SK-MEL-5 (cell line): ENCODE measurements at regions of chr11 and their contacts with region 1.

Region 1: DNA sequence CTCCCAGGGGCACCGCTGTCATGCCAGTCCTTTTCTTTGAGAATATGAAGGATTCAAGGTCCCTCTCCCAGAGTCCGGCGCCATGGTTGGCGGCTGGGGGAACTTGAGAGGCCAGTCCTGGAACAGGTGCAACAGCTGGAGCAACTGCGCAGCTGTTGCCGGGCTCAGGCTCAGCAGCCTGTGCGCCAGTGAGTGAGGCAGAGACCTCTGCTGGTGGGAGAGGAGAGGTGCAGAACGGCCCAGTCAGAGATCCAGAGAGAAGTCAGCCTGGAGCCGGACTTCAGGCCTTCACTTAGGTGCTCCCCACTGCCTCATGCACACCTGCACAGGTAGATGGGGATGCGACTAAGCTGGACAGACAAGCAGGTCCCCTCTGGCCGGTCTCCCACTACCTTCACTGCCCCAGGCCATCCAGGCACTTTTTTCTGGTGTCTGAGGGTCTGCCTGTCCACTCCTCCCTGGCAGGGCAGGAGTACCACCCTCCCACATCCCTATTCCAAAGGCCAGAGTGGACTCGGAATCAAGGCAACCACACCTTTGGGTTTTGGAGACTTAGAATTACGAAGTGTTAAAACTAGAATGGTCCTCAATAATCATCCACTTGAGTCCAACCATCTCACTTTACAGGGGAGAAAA is 4.6 kb downstream of the CHRDL2 start:
- DNase-seq: peak; percentile 81

Region 2: GRCh38 chr11:74473382-74474173 is 253.1 kb before region 1 on chr11:
- in situ Hi-C with region 1: loop called (anchors 10 kb)
- DNase-seq: no peak

Region 3: GRCh38 chr11:74506823-74507222 is 219.8 kb before region 1 on chr11:
- in situ Hi-C with region 1: no loop called
- DNase-seq: no peak

Region 4: DNA sequence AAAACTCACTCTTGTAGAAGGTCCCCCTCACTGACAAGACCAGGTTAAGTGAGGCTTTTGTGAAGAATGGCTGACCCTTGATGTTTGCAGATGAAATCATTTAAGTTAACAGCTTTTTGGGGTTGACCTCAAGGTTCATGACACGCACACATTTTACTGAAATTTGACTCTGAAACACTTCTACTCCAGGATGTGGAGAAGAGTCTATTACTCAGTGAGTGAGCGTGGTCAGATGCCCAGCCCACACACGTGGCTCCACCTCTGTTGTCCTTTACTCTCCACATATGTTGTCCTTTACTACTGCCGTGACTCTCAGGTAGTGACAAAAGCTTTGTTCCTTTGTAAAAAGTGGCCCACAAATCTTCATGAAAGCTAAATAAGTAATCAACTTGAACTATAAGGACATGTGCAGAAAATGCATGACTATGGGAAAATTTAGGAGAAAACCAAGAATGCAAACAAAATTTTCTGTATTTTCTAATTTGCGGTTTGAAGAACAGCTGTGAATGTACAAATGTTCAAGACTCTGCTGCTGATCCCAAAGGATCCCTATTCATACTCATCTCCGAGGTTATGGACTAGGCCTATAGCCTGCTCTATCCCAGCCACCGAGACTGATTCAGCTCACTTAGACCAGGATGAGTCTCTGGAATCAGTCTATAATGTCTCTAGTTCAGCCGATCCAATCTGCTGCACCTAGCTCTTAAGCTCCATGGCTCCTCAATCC is 199.8 kb after region 1 on chr11:
- in situ Hi-C with region 1: no loop called
- DNase-seq: no peak